MCF 10A (cell line): ENCODE measurements at regions of chr1 and their contacts with region 1.

Region 1: DNA sequence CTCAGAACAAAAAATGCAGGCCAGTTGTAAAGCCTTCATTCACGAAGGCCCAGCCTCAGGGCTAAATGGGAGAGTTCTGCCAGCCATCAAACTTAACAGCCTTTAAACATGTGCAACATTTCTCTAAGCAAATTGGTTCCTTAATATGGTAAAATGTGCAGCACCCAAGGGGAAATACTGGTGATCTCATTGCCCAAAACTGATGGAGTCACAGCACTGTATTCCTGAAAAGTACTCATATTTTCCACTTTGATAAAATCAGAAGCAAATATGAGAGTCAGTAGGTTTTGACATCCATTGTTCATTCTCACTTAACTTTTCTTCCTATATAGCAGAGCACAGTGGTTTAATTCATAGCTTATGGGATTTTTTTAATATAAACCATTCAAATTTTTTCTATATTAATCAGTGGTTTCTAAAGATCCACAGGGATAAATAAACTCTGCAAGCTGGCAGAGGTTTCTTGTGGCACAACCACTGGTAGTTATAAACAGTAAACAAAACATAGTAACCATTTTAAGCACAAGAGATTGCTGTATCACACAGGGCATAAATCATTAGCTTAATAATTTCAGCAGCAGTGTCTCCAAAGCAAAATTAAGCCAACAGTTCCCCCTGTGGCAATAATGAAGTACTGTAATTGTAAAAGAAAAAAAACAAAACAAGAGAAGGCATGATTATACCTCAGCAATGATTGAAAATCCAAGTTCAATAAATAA is 106.9 kb upstream of the LYPLAL1 start:
- DNase-seq: peak; percentile 65
- H3K4me3 Mint-ChIP-seq: no peak overlapping the region
- H3K27ac Mint-ChIP-seq: no peak overlapping the region
- H3K4me1 Mint-ChIP-seq: peaks cover 6% of the 10 kb centered on the region
- H3K27me3 Mint-ChIP-seq: no peaks in the 10 kb centered on the region
- CTCF ChIP-seq: peak; percentile 90

Region 2: DNA sequence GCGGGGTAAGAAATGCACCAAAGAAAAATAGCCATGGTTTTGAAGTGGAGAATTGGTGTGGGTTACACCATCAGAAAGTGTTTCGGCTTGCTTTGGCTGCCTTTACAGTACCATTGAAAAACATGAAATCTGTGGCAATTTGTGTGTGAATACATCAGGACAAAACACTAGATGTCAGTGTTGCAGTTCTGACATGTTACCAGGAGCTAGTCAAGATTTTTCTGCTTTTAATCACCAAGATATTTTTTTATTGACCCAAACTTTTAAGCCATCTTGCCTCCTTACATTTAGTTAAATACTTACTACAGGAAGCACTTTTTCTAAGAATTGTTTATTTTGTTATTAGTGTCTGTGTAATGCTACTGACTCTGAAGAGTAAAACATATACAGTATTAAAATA is 767.4 kb before region 1 on chr1:
- CTCF ChIA-PET with region 1: interaction called, 7 read pairs
- POLR2A ChIA-PET with region 1: no interaction called
- intact Hi-C with region 1: loop called (anchors 1 kb)
- DNase-seq: peak; percentile 70
- H3K4me3 Mint-ChIP-seq: no peak overlapping the region
- H3K27ac Mint-ChIP-seq: no peak overlapping the region
- H3K4me1 Mint-ChIP-seq: peaks cover 41% of the 10 kb centered on the region
- H3K27me3 Mint-ChIP-seq: no peaks in the 10 kb centered on the region
- CTCF ChIP-seq: peak; percentile 68

Region 3: GRCh38 chr1:218345673-218346390 is 721.0 kb before region 1 on chr1:
- CTCF ChIA-PET with region 1: interaction called, 71 read pairs
- POLR2A ChIA-PET with region 1: interaction called, 7 read pairs
- intact Hi-C with region 1: no loop called
- DNase-seq: peak; percentile 81
- H3K4me3 Mint-ChIP-seq: no peak overlapping the region
- H3K27ac Mint-ChIP-seq: no peak overlapping the region
- H3K4me1 Mint-ChIP-seq: peaks cover 41% of the 10 kb centered on the region
- H3K27me3 Mint-ChIP-seq: no peaks in the 10 kb centered on the region
- CTCF ChIP-seq: no peak

Region 4: GRCh38 chr1:218711884-218712674 is 354.7 kb before region 1 on chr1:
- CTCF ChIA-PET with region 1: no interaction called
- POLR2A ChIA-PET with region 1: no interaction called
- intact Hi-C with region 1: loop called (anchors 5 kb)
- DNase-seq: peak; percentile 99
- H3K4me3 Mint-ChIP-seq: no peak overlapping the region
- H3K27ac Mint-ChIP-seq: peak overlapping the region; percentile 33
- H3K4me1 Mint-ChIP-seq: peaks cover 53% of the 10 kb centered on the region
- H3K27me3 Mint-ChIP-seq: no peaks in the 10 kb centered on the region
- CTCF ChIP-seq: no peak

Region 5: DNA sequence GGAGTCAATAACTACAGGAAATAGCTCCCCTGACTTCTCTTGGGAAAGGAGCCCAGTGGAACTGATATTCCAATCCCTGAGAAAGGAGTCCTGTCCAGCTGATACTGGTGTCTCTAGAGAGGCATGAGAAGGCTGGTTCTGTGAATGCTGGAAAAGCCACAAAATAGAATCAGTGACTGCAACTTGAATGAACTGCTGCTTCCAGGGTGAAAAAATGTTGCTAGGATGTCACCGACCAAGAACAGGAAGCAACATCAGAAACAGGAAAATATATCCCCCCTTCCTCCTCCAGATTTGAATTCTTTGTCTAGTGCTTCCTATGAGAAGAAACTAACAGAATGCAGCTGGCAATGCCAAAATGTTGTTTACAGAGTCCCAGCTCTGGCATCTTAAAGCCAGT is 162.4 kb before region 1 on chr1:
- CTCF ChIA-PET with region 1: no interaction called
- POLR2A ChIA-PET with region 1: no interaction called
- intact Hi-C with region 1: no loop called
- DNase-seq: no peak
- H3K4me3 Mint-ChIP-seq: no peak overlapping the region
- H3K27ac Mint-ChIP-seq: no peak overlapping the region
- H3K4me1 Mint-ChIP-seq: no peaks in the 10 kb centered on the region
- H3K27me3 Mint-ChIP-seq: no peaks in the 10 kb centered on the region
- CTCF ChIP-seq: no peak

Region 6: DNA sequence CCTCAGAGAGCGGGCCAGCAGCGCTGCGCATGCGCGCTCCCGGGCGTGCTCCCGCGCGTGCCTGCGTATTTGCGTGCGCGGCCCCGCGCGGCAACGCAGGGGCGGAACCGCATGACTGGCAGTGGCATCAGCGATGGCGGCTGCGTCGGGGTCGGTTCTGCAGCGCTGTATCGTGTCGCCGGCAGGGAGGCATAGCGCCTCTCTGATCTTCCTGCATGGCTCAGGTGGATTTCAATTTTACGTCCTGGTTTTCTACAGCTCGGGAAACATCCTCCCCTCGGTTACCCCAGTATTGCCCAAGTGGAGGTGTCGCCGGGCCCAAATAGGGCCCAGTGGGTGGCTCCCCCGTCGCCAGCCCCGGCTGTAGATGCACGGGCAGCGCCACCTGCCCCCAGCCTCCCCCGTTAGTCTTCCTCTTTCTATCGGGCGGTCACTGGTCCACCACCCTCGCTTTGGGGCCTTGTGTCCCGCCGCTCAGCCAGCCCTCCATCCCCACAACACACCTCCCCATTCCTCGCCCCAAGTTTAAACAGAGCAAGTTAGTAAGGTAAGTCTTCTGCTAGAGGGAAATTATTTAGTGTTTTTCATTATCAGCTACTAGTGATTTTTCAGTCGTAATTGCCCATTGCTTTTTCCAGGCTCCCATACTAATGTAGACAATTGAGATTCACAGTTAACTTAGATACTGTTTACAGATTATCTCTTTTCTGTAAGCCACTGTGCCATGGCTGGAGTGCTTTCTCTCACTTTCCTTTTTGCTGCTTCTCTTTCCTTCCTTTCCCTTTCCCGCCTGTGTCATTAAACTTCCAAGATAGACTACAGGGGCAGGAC is 107.2 kb after region 1 on chr1 and contains the start of gene LYPLAL1:
- CTCF ChIA-PET with region 1: interaction called, 11 read pairs
- POLR2A ChIA-PET with region 1: interaction called, 4 read pairs
- intact Hi-C with region 1: loop called (anchors 2 kb)
- DNase-seq: peak; percentile 93
- H3K4me3 Mint-ChIP-seq: peak within 1 kb of the TSS; percentile 93
- H3K27ac Mint-ChIP-seq: peak within 1 kb of the TSS; percentile 84
- H3K4me1 Mint-ChIP-seq: peaks cover 37% of the 10 kb centered on the region
- H3K27me3 Mint-ChIP-seq: no peaks in the 10 kb centered on the region
- CTCF ChIP-seq: no peak
- total RNA-seq, gene LYPLAL1: 59.8 and 69.0 TPM in 2 replicates

Region 7: DNA sequence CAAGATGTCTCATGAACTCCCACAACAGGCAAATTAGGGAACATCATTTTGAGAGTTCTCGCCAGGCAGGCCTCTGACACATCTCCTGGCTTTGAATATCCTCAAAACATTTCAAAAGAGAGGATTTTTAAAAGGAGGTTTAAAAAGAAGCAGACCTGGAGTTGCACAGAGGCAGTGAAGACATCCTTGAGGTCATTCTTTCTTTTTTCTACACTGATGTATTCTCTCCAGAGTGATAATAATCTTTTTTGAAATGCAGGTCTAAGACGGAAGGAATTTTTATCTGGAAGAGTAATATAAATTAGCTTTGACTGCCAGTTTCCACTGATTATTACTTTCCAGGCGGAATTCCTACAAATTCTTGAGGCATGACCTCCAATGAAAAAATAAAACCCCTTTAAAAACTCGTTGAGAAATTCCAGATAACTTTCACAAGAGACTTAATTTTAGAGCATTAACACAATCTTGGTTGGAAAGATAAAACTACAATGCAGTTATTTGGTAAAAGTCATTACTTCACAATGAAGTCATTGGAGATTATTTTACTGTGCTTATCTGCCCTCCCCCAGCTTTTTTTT is 231.9 kb after region 1 on chr1:
- CTCF ChIA-PET with region 1: no interaction called
- POLR2A ChIA-PET with region 1: no interaction called
- intact Hi-C with region 1: no loop called
- DNase-seq: no peak
- H3K4me3 Mint-ChIP-seq: no peak overlapping the region
- H3K27ac Mint-ChIP-seq: no peak overlapping the region
- H3K4me1 Mint-ChIP-seq: no peaks in the 10 kb centered on the region
- H3K27me3 Mint-ChIP-seq: peaks cover 86% of the 10 kb centered on the region
- CTCF ChIP-seq: no peak